Heart left ventricle (tissue), 16 donors: ENCODE measurements at regions of chr7 and their contacts with region 1.

Region 1: GRCh38 chr7:106285051-106285854 is 470 bp upstream of the NAMPT start:
- DNase-seq: peak; percentile 96 to 99 (median 97)
- ATAC-seq: peak; percentile 95 to 98 (median 96)
- H3K4me3 ChIP-seq: peak overlapping the region; percentile 46 to 96 (median 78)
- H3K27ac ChIP-seq: peak overlapping the region; percentile 66 to 99 (median 95)
- H3K4me1 ChIP-seq: peaks cover 0 to 41% (median 20%) of the 10 kb centered on the region in 12 donors
- H3K27me3 ChIP-seq: no peaks in the 10 kb centered on the region
- CTCF ChIP-seq: peak in 1 of 12 donors; percentile 5
- POLR2A ChIP-seq: peak in 1 of 2 donors; percentile 75

Region 2: GRCh38 chr7:106064771-106065585 is 220.3 kb before region 1 on chr7:
- intact Hi-C with region 1: loop called in 2 of 10 experiments (anchors 10 kb)
- DNase-seq: peak; percentile 84 to 94 (median 89)
- ATAC-seq: peak; percentile 94 to 96 (median 94)
- H3K4me3 ChIP-seq: peak overlapping the region in 10 of 12 donors; percentile 7 to 51 (median 34)
- H3K27ac ChIP-seq: peak overlapping the region; percentile 65 to 96 (median 86)
- H3K4me1 ChIP-seq: peaks cover 0 to 38% (median 32%) of the 10 kb centered on the region in 12 donors
- H3K27me3 ChIP-seq: no peaks in the 10 kb centered on the region
- CTCF ChIP-seq: peak in 1 of 12 donors; percentile 18
- POLR2A ChIP-seq: no peak

Region 3: DNA sequence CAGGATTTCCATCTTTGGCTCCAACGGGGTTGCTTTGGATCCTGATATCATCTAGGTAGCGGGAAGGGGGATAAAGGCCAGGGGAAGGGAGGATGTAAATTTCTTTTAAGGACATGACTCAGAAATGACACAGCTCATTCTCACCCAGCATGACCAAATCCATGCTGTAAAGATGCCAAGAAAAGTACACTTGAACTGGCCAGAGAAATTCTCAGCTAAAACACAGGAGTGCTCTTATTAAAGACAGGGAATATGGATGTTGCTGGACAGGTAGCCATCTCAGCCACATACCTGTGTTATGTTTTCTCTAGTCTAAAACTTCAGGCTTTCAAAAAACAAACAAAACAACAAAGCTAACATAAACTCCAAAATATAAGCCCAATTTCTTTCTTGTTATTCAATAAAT is 68.7 kb before region 1 on chr7:
- intact Hi-C with region 1: loop called in 5 of 10 experiments (anchors 1 to 5 kb)
- DNase-seq: peak in 3 of 5 donors; percentile 32 to 79 (median 48)
- ATAC-seq: peak; percentile 68 to 89 (median 86)
- H3K4me3 ChIP-seq: peak overlapping the region in 8 of 12 donors; percentile 6 to 33 (median 28)
- H3K27ac ChIP-seq: peak overlapping the region; percentile 76 to 93 (median 88)
- H3K4me1 ChIP-seq: peaks cover 7 to 38% (median 24%) of the 10 kb centered on the region in 12 donors
- H3K27me3 ChIP-seq: no peaks in the 10 kb centered on the region
- CTCF ChIP-seq: no peak
- POLR2A ChIP-seq: no peak

Region 4: GRCh38 chr7:106239404-106239803 is 45.8 kb before region 1 on chr7:
- intact Hi-C with region 1: loop called in 1 of 10 experiments (anchors 5 kb)
- DNase-seq: peak in 1 of 5 donors; percentile 36
- ATAC-seq: peak in 3 of 4 donors; percentile 38 to 71 (median 62)
- H3K4me3 ChIP-seq: no peak overlapping the region
- H3K27ac ChIP-seq: peak overlapping the region in 8 of 12 donors; percentile 4 to 68 (median 20)
- H3K4me1 ChIP-seq: peaks cover 0 to 11% (median 0%) of the 10 kb centered on the region in 12 donors
- H3K27me3 ChIP-seq: no peaks in the 10 kb centered on the region
- CTCF ChIP-seq: no peak
- POLR2A ChIP-seq: no peak

Region 5: GRCh38 chr7:106421181-106421762 is 136.0 kb after region 1 on chr7:
- intact Hi-C with region 1: loop called in 2 of 10 experiments (anchors 1 to 5 kb)
- DNase-seq: peak; percentile 68 to 85 (median 79)
- ATAC-seq: peak; percentile 68 to 82 (median 74)
- H3K4me3 ChIP-seq: no peak overlapping the region
- H3K27ac ChIP-seq: peak overlapping the region in 11 of 12 donors; percentile 30 to 92 (median 65)
- H3K4me1 ChIP-seq: peaks cover 0 to 81% (median 21%) of the 10 kb centered on the region in 12 donors
- H3K27me3 ChIP-seq: no peaks in the 10 kb centered on the region
- CTCF ChIP-seq: no peak
- POLR2A ChIP-seq: no peak

Region 6: GRCh38 chr7:106461993-106462859 is 177.0 kb after region 1 on chr7:
- intact Hi-C with region 1: loop called in 5 of 10 experiments (anchors 5 to 10 kb)
- DNase-seq: no peak
- ATAC-seq: peak in 2 of 4 donors; percentile 52 to 63
- H3K4me3 ChIP-seq: no peak overlapping the region
- H3K27ac ChIP-seq: no peak overlapping the region
- H3K4me1 ChIP-seq: peaks cover 0 to 17% (median 3%) of the 10 kb centered on the region in 12 donors
- H3K27me3 ChIP-seq: no peaks in the 10 kb centered on the region
- CTCF ChIP-seq: peak; percentile 44 to 72 (median 64)
- POLR2A ChIP-seq: no peak

Region 7: DNA sequence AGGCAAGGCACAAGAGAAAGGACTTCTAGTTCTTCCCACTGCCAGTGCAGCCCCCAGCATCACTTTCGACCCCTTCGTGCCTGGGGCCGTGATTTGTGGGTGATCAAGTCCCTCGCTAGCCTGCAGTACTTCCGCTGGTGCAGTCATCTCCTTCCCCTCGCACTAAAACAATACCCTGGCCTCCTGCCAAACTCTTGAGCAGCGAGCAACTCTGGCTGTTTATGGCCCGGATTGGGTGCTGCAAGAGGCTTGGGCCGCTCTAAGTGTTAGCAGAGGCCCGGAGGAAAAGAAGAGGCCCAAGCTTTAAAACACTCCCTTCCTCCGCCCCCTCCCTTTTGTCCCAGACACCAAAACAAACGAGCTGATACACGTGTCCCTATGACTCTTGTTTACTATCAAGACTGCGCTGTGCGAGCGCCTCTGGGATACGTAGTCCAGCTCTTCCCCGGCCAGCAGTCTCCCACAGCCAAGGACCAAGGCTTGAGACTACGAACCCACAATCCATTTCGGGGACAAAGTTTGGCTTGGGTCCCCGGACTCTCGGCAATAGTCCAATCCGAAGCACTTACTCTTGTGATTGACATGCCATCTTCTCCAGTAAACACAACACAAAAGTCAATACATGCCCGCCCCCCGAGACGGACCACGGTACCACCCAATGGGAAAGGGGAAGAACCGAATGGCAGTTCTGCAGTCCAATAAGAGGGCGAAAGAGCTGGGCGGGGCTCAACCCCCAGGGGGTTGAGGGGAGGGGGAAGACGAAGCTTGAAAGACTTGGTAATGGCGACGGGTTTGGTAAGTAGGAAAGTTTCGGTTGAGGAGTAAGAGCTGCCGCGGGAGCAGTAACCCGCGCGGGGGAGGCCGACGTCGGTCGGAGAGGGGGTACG is 883.2 kb after region 1 on chr7 and contains the start of gene HBP1:
- intact Hi-C with region 1: loop called in 1 of 10 experiments (anchors 5 kb)
- DNase-seq: peak; percentile 98 to 99 (median 99)
- ATAC-seq: peak; percentile 93 to 96 (median 94)
- H3K4me3 ChIP-seq: peak within 1 kb of the TSS; percentile 73 to 98 (median 78)
- H3K27ac ChIP-seq: peak within 1 kb of the TSS; percentile 88 to 99 (median 96)
- H3K4me1 ChIP-seq: peaks cover 4 to 44% (median 30%) of the 10 kb centered on the region in 12 donors
- H3K27me3 ChIP-seq: no peaks in the 10 kb centered on the region
- CTCF ChIP-seq: no peak
- POLR2A ChIP-seq: peak; percentile 17 to 72
- total RNA-seq, gene HBP1: 41.3 to 98.4 (median 60.8) TPM